Right ventricle myocardium inferior (tissue), 1 donor: ENCODE measurements at regions of chr11 and their contacts with region 1.

Region 1: GRCh38 chr11:126318574-126319373 is 14.9 kb downstream of the DCPS start:
- DNase-seq: no peak
- ATAC-seq: peak; percentile 88

Region 2: DNA sequence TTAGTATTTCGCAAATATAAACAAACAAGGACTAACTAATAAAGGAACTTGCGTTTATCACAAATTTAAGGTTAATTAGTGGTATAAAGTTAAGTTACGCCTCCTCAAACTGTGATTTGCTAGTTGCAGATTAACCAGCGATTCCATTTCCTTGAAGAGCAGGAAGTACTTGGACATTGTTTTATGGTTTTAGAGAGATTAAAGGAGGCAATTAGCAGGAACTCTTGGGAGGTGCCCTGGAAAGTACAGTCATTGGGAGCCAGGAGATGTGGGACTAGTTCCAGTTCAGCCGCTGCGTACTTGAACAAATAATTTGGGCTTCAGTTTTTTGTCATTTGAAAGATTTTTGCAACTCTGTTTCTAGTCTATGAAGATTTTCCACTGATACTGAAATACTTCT is 103.9 kb before region 1 on chr11:
- intact Hi-C with region 1: no loop called
- DNase-seq: no peak
- ATAC-seq: no peak

Region 3: GRCh38 chr11:126341760-126342161 is 23.0 kb after region 1 on chr11:
- intact Hi-C with region 1: no loop called
- DNase-seq: no peak
- ATAC-seq: no peak

Region 4: GRCh38 chr11:126391970-126392639 is 73.3 kb after region 1 on chr11:
- intact Hi-C with region 1: loop called (anchors 5 kb)
- DNase-seq: no peak
- ATAC-seq: peak; percentile 21

Region 5: GRCh38 chr11:126416542-126417090 is 97.8 kb after region 1 on chr11:
- intact Hi-C with region 1: loop called (anchors 5 kb)
- DNase-seq: peak; percentile 96
- ATAC-seq: peak; percentile 77